Kidney (tissue), 22 donors: ENCODE measurements at regions of chr5 and their contacts with region 1.

Region 1: DNA sequence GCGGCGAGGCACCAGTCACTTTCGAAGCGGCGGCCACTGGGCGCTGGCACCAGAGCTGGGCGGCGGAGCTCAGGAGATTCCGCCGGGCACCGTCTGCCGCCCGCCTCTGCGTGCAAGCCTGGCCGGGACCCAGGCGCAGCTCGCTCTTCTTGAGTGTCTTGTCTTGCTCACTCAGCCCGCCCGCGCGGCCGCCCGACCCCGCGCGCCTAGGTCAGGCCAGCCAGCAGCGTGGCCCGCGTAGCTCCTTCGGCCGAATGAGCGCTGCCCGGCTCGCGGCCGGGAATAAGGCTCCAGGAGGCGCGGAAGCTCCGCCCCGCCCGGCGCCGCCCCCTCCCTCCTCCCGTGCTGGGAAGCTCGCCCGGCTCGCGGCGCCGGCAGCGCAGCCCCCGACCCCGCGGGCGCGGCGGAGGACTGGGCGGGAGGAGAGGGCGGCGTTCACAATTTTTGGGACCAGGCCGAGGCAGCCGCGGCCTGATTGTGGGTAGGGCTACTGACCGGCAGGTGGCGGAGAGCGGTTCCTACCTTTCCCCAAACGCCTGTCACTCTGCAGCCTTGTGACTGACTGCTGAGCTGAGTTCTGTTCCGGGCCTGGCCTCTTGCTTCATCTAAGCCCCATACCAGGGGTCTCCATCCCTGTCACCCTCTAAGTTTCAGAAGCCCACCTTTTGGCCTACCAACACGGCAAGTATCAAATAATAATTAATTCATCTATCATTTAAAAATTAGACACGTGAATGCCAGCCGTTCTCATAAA is at the start of gene HBEGF:
- DNase-seq: peak; percentile 85 to 94 (median 86)
- H3K4me3 ChIP-seq: peak within 1 kb of the TSS; percentile 61 to 69 (median 65)
- H3K27ac ChIP-seq: peak within 1 kb of the TSS; percentile 66 to 69
- H3K4me1 ChIP-seq: peaks cover 5 to 20% (median 6%) of the 10 kb centered on the region in 3 donors
- H3K27me3 ChIP-seq: no peaks in the 10 kb centered on the region
- CTCF ChIP-seq: peak; percentile 39
- total RNA-seq, gene HBEGF: 7.8 TPM

Region 2: DNA sequence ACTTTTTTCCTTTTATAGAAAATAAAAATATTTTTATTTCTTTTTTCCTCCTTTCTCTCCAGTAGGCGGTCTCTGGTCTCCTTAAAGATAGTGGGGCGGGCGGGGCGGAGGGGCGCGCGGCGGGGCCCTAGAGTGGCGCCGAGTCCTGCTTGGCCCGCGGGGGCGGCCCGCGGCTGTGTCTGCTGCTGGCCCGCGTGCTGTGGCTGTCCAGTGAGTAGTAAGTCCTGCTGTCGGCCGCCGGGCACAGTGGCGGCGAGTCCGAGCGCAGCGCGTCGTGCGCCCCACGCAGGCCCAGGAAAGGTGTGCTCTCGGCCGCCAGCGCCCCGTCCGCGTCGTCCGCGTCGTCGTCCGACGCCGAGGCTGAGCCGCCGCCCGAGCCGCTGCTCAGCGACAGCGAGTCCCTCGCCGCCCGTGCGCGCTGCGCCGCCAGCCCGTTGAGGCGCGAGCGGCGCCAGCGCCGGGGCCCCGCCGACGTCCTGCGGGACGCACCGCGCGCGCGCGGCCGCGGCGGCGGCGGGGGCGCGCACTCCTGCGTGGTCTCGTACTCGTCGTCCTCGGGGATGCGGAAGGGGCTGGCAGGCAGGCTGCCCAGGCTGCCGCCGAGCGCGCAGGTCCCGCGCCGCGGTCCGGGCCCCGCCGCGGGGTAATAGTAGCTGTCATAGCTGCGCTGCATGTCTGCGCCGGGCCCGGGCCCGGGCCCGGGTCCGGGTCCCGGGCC is 498.6 kb before region 1 on chr5:
- intact Hi-C with region 1: no loop called
- DNase-seq: peak; percentile 56 to 90 (median 77)
- H3K4me3 ChIP-seq: peak overlapping the region in 2 of 3 donors; percentile 13 to 51
- H3K27ac ChIP-seq: no peak overlapping the region
- H3K4me1 ChIP-seq: peaks cover 0 to 7% (median 0%) of the 10 kb centered on the region in 3 donors
- H3K27me3 ChIP-seq: no peaks in the 10 kb centered on the region
- CTCF ChIP-seq: no peak

Region 3: DNA sequence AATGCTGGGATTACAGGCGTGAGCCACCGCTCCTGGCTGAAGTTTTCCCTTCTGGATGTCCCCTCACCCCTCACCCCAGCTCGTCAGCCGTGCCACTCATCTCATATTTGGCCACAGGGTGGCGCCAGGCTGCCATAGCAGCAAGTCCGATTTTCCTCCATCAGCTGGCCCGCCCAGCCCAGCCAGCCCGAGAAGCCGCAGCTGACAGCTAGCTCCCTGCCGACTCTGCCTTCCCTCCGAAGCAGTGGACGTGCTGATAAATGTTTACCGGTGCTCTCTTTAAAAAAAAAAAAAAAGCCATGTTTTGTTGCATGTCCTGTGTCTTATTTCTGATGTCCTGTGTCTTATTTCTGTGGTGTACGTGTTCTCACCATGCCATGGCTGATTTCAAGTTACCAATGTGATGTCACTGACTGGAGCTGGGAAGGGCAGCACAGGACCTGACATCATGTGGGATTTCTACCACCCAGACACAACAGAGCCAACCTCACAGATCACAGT is 102.0 kb before region 1 on chr5:
- intact Hi-C with region 1: loop called (anchors 5 kb)
- DNase-seq: peak; percentile 91 to 96 (median 93)
- H3K4me3 ChIP-seq: no peak overlapping the region
- H3K27ac ChIP-seq: no peak overlapping the region
- H3K4me1 ChIP-seq: peaks cover 5 to 39% (median 37%) of the 10 kb centered on the region in 3 donors
- H3K27me3 ChIP-seq: no peaks in the 10 kb centered on the region
- CTCF ChIP-seq: peak; percentile 91

Region 4: DNA sequence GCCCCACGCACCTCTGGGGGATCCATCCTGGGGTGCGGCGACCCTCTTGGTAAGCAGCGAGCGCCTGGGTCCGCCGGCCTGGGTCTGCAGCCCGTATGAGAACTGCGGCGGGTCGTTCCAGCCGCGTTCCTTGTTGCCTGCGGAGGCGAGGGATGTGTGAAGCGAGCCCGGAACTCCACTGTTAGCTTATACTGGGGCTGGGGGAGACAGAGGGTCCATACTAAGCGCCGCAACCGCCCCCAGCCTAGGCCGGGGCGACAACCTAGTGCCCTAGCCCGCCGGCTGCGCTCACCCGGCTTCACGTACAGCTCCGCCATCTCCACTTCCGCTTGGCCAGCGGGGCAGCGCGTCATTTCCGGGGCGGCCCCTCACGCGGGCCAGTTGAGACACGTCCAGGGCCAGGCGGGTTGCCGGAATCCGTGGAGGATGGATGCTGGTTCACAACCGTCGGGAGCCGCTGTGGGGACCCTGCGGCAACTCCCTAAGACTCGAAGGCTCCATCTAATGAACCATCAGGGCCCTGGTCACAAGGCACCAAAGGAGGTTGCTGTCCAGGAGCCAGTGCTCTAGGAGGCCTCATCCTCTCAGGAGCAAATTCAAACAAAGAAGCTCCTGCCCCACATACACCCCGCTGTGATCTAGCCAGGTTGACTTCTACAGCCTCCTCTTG is 210.7 kb after region 1 on chr5 and contains the start of gene SRA1:
- intact Hi-C with region 1: no loop called
- DNase-seq: peak; percentile 94 to 97 (median 95)
- H3K4me3 ChIP-seq: peak within 1 kb of the TSS; percentile 64 to 81 (median 74)
- H3K27ac ChIP-seq: peak within 1 kb of the TSS; percentile 85 to 95
- H3K4me1 ChIP-seq: peaks cover 0 to 17% (median 10%) of the 10 kb centered on the region in 3 donors
- H3K27me3 ChIP-seq: no peaks in the 10 kb centered on the region
- CTCF ChIP-seq: no peak
- total RNA-seq, gene SRA1: 31.3 TPM